ENCODE measurements at regions of chr16 and their contacts with region 1.

Region 1: DNA sequence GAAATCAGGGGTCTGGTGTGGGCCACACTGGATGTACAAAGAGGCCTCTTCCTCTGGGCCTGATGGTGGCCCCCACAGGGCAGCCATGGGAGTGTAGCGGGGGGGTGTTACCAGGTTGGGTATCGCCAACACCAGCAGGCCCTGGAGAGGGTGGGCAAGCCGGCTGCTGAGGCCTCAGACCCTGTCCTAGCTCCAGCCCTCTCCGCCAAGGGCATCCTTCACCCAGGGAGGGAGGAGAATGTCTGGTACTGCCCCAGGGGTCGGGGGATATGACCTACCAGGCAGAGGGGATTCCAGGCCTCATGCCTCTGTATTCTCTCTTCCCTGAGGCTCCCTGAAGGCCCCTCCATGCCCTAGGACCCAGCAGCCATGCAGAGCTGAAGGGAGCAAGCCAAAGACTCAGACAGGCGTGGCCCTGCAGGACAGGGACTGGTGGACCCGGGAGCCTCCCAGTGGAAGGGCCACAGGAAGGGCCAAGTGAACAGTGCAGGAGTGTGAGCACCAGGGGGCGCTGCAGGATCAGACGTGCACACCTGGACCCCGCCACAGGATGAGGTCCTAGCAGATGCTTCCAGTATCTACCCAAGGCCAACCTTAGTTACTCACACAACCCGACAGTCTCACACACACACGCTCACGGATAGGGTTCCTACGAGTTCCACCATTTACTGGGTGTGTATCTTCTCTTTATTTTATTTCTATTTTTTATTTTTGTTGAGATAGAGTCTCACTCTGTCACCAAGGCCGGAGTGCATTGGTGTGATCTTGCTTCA is 10.9 kb upstream of the CES4A start:
- DNase-seq: peak; percentile 84
- H3K4me3 Mint-ChIP-seq: no peak overlapping the region
- H3K27ac Mint-ChIP-seq: no peak overlapping the region
- H3K4me1 Mint-ChIP-seq: peaks cover 5% of the 10 kb centered on the region
- H3K27me3 Mint-ChIP-seq: no peaks in the 10 kb centered on the region
- CTCF ChIP-seq: peak; percentile 97

Region 2: GRCh38 chr16:65936096-65936495 is 1041.4 kb before region 1 on chr16:
- CTCF ChIA-PET with region 1: no interaction called
- POLR2A ChIA-PET with region 1: no interaction called
- intact Hi-C with region 1: no loop called
- DNase-seq: no peak
- H3K4me3 Mint-ChIP-seq: no peak overlapping the region
- H3K27ac Mint-ChIP-seq: no peak overlapping the region
- H3K4me1 Mint-ChIP-seq: no peaks in the 10 kb centered on the region
- H3K27me3 Mint-ChIP-seq: no peaks in the 10 kb centered on the region
- CTCF ChIP-seq: no peak

Region 3: GRCh38 chr16:66961065-66961744 is 16.3 kb before region 1 on chr16 and contains the start of gene CES3:
- CTCF ChIA-PET with region 1: interaction called, 30 read pairs
- POLR2A ChIA-PET with region 1: no interaction called
- intact Hi-C with region 1: no loop called
- DNase-seq: peak; percentile 66
- H3K4me3 Mint-ChIP-seq: no peak within 1 kb of the TSS
- H3K27ac Mint-ChIP-seq: no peak within 1 kb of the TSS
- H3K4me1 Mint-ChIP-seq: peaks cover 9% of the 10 kb centered on the region
- H3K27me3 Mint-ChIP-seq: peaks cover 11% of the 10 kb centered on the region
- CTCF ChIP-seq: peak; percentile 66
- total RNA-seq, gene CES3: 0.52 and 0.65 TPM in 2 replicates

Region 4: GRCh38 chr16:67017810-67018488 is 40.4 kb after region 1 on chr16:
- CTCF ChIA-PET with region 1: interaction called, 14 read pairs
- POLR2A ChIA-PET with region 1: interaction called, 3 read pairs
- intact Hi-C with region 1: loop called (anchors 1 kb)
- DNase-seq: peak; percentile 97
- H3K4me3 Mint-ChIP-seq: no peak overlapping the region
- H3K27ac Mint-ChIP-seq: no peak overlapping the region
- H3K4me1 Mint-ChIP-seq: no peaks in the 10 kb centered on the region
- H3K27me3 Mint-ChIP-seq: no peaks in the 10 kb centered on the region
- CTCF ChIP-seq: peak; percentile 63

Region 5: GRCh38 chr16:67159593-67160406 is 182.3 kb after region 1 on chr16 and contains the starts of genes FBXL8 and TRADD:
- CTCF ChIA-PET with region 1: interaction called, 29 read pairs
- POLR2A ChIA-PET with region 1: interaction called, 3 read pairs
- intact Hi-C with region 1: loop called (anchors 1 kb)
- DNase-seq: peak; percentile 70
- H3K4me3 Mint-ChIP-seq: peak within 1 kb of the TSS; percentile 84
- H3K27ac Mint-ChIP-seq: peak within 1 kb of the TSS; percentile 63
- H3K4me1 Mint-ChIP-seq: peaks cover 9% of the 10 kb centered on the region
- H3K27me3 Mint-ChIP-seq: no peaks in the 10 kb centered on the region
- CTCF ChIP-seq: peak; percentile 56
- total RNA-seq, gene FBXL8: 15.9 and 17.2 TPM in 2 replicates
- total RNA-seq, gene TRADD: 12.9 and 13.3 TPM in 2 replicates